CD14-positive monocyte (primary cell): ENCODE measurements at regions of chr13 and their contacts with region 1.

Region 1: DNA sequence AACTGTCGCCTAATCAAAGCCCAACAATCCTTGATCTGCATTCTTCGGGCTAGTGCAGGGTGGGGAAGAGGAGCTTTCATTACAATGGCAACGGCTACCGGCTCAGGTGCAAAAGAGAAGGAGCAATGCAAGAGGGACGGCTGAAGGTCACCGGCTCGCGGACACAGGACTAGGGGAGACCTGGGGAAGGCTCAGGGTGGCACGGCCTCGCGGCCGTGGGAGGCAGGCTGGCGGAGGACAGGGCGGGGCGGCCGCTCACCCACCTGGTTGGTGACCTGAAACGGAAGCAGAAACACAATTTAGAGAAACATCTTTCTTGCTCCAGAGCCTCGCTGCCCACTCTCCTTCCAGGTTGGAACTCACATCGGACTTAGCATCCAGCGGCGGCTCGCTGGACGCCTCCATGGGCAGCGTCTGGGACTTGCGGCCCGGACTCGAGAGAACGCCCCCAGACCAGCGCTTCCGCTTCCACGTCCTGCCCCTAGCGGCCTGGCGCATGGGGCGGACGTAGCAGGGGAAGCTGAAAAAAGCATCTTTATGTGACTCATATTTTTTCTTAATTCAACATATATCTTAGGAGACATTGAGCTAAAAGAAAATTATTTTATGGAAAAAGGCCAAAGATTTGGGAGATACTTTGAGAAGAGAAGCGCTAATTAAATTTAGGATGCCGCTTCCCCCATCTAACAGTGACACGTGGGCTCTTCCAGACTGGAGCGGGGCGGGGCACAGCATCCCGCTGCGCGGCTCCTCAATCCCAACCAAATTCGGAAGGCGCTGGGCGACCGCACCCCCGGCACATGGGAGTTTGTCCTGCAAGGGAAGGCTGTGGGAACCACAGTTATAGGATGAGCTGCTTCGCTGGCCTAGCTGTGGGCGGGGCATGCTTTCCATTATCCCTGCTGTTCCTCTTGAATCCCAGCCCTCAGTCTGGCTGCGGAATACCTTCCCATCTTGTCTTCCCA is at the start of gene COMMD6:
- DNase-seq: peak; percentile 69 to 72 (median 71)
- H3K4me3 ChIP-seq: peak within 1 kb of the TSS; percentile 64 to 98 (median 81)
- H3K4me3 Mint-ChIP-seq: peak within 1 kb of the TSS; percentile 95 to 97
- H3K27ac ChIP-seq: peak within 1 kb of the TSS; percentile 25 to 87
- H3K27ac Mint-ChIP-seq: peak within 1 kb of the TSS; percentile 84 to 95 (median 93)
- H3K4me1 ChIP-seq: peaks cover 22 to 34% of the 10 kb centered on the region in 2 donors
- H3K4me1 Mint-ChIP-seq: peaks cover 37% of the 10 kb centered on the region
- H3K27me3 ChIP-seq: no peaks in the 10 kb centered on the region
- H3K27me3 Mint-ChIP-seq: peaks cover 0 to 1% (median 0%) of the 10 kb centered on the region in 3 donors
- CTCF ChIP-seq: peak; percentile 46
- polyA plus RNA-seq, gene COMMD6: 180 to 401 (median 330) TPM

Region 2: GRCh38 chr13:75482070-75482819 is 55.4 kb before region 1 on chr13 and contains the start of gene TBC1D4:
- intact Hi-C with region 1: loop called in 1 of 2 experiments (anchors 5 kb)
- DNase-seq: peak; percentile 79 to 83 (median 80)
- H3K4me3 ChIP-seq: peak within 1 kb of the TSS; percentile 75 to 95 (median 78)
- H3K4me3 Mint-ChIP-seq: peak within 1 kb of the TSS; percentile 99
- H3K27ac ChIP-seq: peak within 1 kb of the TSS; percentile 45 to 69
- H3K27ac Mint-ChIP-seq: peak within 1 kb of the TSS; percentile 70 to 89 (median 84)
- H3K4me1 ChIP-seq: peaks cover 28 to 47% of the 10 kb centered on the region in 2 donors
- H3K4me1 Mint-ChIP-seq: peaks cover 46% of the 10 kb centered on the region
- H3K27me3 ChIP-seq: peaks cover 20 to 28% of the 10 kb centered on the region in 2 donors
- H3K27me3 Mint-ChIP-seq: peaks cover 36 to 53% (median 45%) of the 10 kb centered on the region in 3 donors
- CTCF ChIP-seq: peak; percentile 88
- polyA plus RNA-seq, gene TBC1D4: 2.0 to 6.7 (median 2.5) TPM

Region 3: GRCh38 chr13:75505327-75505726 is 32.4 kb before region 1 on chr13:
- intact Hi-C with region 1: no loop called
- DNase-seq: peak; percentile 66 to 84 (median 80)
- H3K4me3 ChIP-seq: peak overlapping the region in 1 of 3 experiments; percentile 37
- H3K4me3 Mint-ChIP-seq: no peak overlapping the region
- H3K27ac ChIP-seq: peak overlapping the region in 1 of 2 donors; percentile 68
- H3K27ac Mint-ChIP-seq: peak overlapping the region; percentile 38 to 93 (median 79)
- H3K4me1 ChIP-seq: peaks cover 35 to 38% of the 10 kb centered on the region in 2 donors
- H3K4me1 Mint-ChIP-seq: peaks cover 31% of the 10 kb centered on the region
- H3K27me3 ChIP-seq: no peaks in the 10 kb centered on the region
- H3K27me3 Mint-ChIP-seq: peaks cover 0 to 7% (median 0%) of the 10 kb centered on the region in 3 donors
- CTCF ChIP-seq: no peak

Region 4: DNA sequence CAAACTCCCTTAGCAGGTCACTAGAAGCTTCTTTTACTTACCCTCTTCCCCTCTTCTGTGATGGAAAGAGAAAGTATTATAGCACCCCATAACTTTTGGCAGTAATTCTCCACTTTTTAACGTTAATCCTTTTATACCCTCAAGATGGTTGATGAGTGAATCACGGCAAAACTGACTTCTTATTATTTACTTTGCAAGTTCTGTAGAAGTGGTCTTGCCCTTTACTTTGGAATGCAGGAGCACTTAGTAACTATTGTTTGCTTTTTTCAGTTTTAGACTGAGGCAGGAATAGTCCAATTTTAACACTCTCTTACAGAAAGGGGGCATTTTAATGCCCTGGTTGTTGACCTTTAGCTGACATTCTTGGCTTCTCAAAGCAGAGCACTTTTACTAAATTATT is 358.6 kb after region 1 on chr13:
- intact Hi-C with region 1: no loop called
- DNase-seq: no peak
- H3K4me3 ChIP-seq: no peak overlapping the region
- H3K4me3 Mint-ChIP-seq: no peak overlapping the region
- H3K27ac ChIP-seq: no peak overlapping the region
- H3K27ac Mint-ChIP-seq: no peak overlapping the region
- H3K4me1 ChIP-seq: no peaks in the 10 kb centered on the region
- H3K4me1 Mint-ChIP-seq: no peaks in the 10 kb centered on the region
- H3K27me3 ChIP-seq: no peaks in the 10 kb centered on the region
- H3K27me3 Mint-ChIP-seq: no peaks in the 10 kb centered on the region
- CTCF ChIP-seq: no peak